CD8-positive, alpha-beta T cell (primary cell): ENCODE measurements at regions of chr1 and their contacts with region 1.

Region 1: DNA sequence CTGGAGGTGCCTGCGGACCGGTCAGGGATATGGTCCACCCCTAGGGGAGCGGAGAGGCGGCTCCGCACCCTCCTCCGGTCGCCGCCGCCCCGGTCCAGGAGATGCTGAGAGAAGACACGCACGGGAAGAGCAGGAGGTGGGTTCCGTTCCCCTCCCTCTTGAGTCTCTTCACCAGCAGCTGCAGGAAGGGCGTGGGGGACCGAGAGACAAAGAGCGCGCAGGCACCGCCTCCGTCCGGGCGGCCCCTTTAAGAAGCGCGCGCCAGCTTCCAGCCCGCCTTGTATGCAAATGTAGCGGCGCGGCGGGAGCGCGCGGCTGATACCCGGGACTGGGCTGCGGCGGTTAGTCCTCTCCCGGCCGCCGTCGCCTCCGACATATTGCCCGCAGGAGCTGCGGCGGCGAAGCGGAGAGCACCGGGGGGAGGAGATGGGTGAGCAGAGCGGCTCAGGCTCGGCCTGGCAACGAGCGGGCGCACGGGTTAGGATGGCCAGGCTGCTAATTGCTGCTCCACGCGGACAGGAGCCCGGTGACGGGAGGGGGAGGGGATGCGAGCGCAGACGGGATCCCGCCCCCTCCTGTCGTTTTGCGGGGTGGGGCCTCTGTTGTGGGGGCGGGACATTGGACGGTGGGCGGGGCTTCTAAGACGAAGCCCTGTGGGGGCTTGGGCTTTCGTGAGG is at the start of gene TMEM39B:
- DNase-seq: peak; percentile 85 to 97 (median 92)
- ATAC-seq: peak; percentile 86
- H3K4me3 ChIP-seq: peak within 1 kb of the TSS; percentile 75 to 99
- H3K4me3 Mint-ChIP-seq: peak within 1 kb of the TSS; percentile 82
- H3K27ac ChIP-seq: peak within 1 kb of the TSS; percentile 65 to 74
- H3K27ac Mint-ChIP-seq: peak within 1 kb of the TSS; percentile 86
- H3K4me1 ChIP-seq: peaks cover 18% of the 10 kb centered on the region
- H3K4me1 Mint-ChIP-seq: peaks cover 32% of the 10 kb centered on the region
- H3K27me3 ChIP-seq: no peaks in the 10 kb centered on the region
- H3K27me3 Mint-ChIP-seq: no peaks in the 10 kb centered on the region
- CTCF ChIP-seq: no peak
- total RNA-seq, gene TMEM39B: 6.6 to 7.6 TPM

Region 2: GRCh38 chr1:31762726-31763670 is 309.8 kb before region 1 on chr1:
- CTCF ChIA-PET with region 1: no interaction called
- POLR2A ChIA-PET with region 1: no interaction called
- intact Hi-C with region 1: loop called in 1 of 2 experiments (anchors 5 kb)
- DNase-seq: peak; percentile 39 to 86 (median 69)
- ATAC-seq: peak; percentile 43
- H3K4me3 ChIP-seq: peak overlapping the region; percentile 41 to 57
- H3K4me3 Mint-ChIP-seq: peak overlapping the region; percentile 80
- H3K27ac ChIP-seq: no peak overlapping the region
- H3K27ac Mint-ChIP-seq: no peak overlapping the region
- H3K4me1 ChIP-seq: peaks cover 40% of the 10 kb centered on the region
- H3K4me1 Mint-ChIP-seq: peaks cover 29% of the 10 kb centered on the region
- H3K27me3 ChIP-seq: peaks cover 11 to 14% of the 10 kb centered on the region in 2 experiments
- H3K27me3 Mint-ChIP-seq: peaks cover 11% of the 10 kb centered on the region
- CTCF ChIP-seq: peak; percentile 45

Region 3: DNA sequence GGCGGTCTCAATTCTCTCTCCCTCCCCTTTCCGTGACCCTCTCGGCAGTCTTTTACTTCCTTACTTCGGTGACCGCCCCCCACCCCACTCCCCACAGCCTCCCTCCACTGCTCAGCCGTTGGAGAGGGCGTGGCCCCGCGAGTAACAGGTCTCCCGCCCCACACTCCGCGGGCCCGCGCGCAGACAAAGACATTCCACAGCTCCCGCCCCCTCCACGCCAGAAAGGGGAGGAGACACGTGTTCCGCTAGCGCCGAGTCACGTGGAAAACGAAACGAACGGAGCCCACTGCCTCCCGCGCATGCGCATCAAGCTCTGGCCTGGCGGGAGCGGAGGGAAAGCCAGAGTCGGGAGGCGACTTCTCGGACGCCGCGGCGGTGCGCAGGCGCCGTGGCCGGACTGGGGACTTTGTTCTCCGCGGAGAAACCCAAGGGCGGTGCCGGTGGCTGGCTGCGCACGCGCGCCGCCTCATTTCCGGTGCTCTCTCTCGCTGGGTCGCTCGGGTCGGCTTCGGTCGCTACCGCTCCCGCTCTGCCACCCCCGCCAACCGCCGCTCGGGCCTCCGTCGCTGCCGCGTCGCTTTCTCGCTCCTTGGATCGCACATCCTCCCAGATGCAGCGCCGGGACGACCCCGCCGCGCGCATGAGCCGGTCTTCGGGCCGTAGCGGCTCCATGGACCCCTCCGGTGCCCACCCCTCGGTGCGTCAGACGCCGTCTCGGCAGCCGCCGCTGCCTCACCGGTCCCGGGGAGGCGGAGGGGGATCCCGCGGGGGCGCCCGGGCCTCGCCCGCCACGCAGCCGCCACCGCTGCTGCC is 59.2 kb before region 1 on chr1 and contains the start of gene KHDRBS1:
- CTCF ChIA-PET with region 1: no interaction called
- POLR2A ChIA-PET with region 1: interaction called, 26 read pairs
- intact Hi-C with region 1: loop called (anchors 1 kb)
- DNase-seq: peak; percentile 92 to 100 (median 97)
- ATAC-seq: peak; percentile 85
- H3K4me3 ChIP-seq: peak within 1 kb of the TSS; percentile 82 to 98
- H3K4me3 Mint-ChIP-seq: peak within 1 kb of the TSS; percentile 96
- H3K27ac ChIP-seq: peak within 1 kb of the TSS; percentile 93
- H3K27ac Mint-ChIP-seq: peak within 1 kb of the TSS; percentile 99
- H3K4me1 ChIP-seq: peaks cover 28% of the 10 kb centered on the region
- H3K4me1 Mint-ChIP-seq: peaks cover 30% of the 10 kb centered on the region
- H3K27me3 ChIP-seq: no peaks in the 10 kb centered on the region
- H3K27me3 Mint-ChIP-seq: no peaks in the 10 kb centered on the region
- CTCF ChIP-seq: no peak
- total RNA-seq, gene KHDRBS1: 102 TPM

Region 4: DNA sequence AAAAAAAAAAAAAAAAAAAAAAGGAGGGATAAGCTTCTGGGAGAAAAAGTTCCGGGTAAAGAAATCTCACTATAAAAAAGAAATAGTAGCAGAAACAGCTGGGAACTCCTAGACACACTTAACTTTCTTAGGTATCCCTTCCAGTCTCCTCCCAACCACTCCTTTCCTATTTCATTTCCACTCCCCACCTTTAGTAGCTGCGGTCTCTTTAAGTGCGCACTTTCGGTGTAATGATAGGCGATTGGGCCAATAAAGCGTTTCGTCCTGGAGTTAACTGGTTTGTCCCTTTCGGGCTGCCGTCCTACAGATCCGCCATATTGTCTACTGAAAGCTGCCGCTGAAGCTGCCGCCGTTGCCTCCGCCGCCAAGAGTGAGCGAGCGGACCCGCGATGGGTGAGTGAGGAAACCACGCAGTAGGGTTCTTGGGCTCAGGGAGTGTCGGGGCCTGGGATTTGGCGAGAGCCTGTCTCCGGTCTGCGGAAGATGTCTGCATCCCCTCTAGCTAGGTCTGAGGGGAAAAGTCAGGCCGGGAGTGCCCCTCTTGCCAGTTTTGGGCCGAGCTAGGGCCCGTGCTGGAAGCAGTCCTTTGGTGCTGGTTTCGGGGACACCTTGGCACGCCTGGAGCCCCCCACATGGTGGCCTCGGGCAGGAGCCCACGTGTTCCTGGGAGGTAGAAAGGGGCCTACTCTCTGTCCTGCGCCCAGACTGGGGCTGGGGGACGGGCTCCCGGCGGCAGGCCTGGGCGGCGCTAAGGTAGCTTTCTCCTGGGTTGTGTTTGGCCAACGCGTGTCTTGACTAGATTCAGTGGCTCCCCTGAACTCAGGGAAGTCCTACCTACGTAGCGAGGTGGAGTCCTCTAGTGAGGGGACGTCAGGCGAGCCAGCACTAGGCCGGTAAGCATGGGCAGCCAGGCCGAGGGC is 35.2 kb after region 1 on chr1 and contains the start of gene KPNA6:
- CTCF ChIA-PET with region 1: interaction called, 9 read pairs
- POLR2A ChIA-PET with region 1: interaction called, 51 read pairs
- intact Hi-C with region 1: loop called (anchors 1 kb)
- DNase-seq: peak; percentile 83 to 98 (median 90)
- ATAC-seq: peak; percentile 89
- H3K4me3 ChIP-seq: peak within 1 kb of the TSS; percentile 87 to 95
- H3K4me3 Mint-ChIP-seq: peak within 1 kb of the TSS; percentile 98
- H3K27ac ChIP-seq: peak within 1 kb of the TSS; percentile 84 to 93
- H3K27ac Mint-ChIP-seq: peak within 1 kb of the TSS; percentile 98
- H3K4me1 ChIP-seq: peaks cover 45% of the 10 kb centered on the region
- H3K4me1 Mint-ChIP-seq: peaks cover 50% of the 10 kb centered on the region
- H3K27me3 ChIP-seq: no peaks in the 10 kb centered on the region
- H3K27me3 Mint-ChIP-seq: no peaks in the 10 kb centered on the region
- CTCF ChIP-seq: no peak
- total RNA-seq, gene KPNA6: 51.7 to 58.7 TPM

Region 5: GRCh38 chr1:32127409-32128198 is 54.8 kb after region 1 on chr1:
- CTCF ChIA-PET with region 1: no interaction called
- POLR2A ChIA-PET with region 1: no interaction called
- intact Hi-C with region 1: no loop called
- DNase-seq: no peak
- ATAC-seq: no peak
- H3K4me3 ChIP-seq: no peak overlapping the region
- H3K4me3 Mint-ChIP-seq: no peak overlapping the region
- H3K27ac ChIP-seq: no peak overlapping the region
- H3K27ac Mint-ChIP-seq: peak overlapping the region; percentile 7
- H3K4me1 ChIP-seq: peaks cover 26% of the 10 kb centered on the region
- H3K4me1 Mint-ChIP-seq: peaks cover 56% of the 10 kb centered on the region
- H3K27me3 ChIP-seq: no peaks in the 10 kb centered on the region
- H3K27me3 Mint-ChIP-seq: no peaks in the 10 kb centered on the region
- CTCF ChIP-seq: no peak

Region 6: DNA sequence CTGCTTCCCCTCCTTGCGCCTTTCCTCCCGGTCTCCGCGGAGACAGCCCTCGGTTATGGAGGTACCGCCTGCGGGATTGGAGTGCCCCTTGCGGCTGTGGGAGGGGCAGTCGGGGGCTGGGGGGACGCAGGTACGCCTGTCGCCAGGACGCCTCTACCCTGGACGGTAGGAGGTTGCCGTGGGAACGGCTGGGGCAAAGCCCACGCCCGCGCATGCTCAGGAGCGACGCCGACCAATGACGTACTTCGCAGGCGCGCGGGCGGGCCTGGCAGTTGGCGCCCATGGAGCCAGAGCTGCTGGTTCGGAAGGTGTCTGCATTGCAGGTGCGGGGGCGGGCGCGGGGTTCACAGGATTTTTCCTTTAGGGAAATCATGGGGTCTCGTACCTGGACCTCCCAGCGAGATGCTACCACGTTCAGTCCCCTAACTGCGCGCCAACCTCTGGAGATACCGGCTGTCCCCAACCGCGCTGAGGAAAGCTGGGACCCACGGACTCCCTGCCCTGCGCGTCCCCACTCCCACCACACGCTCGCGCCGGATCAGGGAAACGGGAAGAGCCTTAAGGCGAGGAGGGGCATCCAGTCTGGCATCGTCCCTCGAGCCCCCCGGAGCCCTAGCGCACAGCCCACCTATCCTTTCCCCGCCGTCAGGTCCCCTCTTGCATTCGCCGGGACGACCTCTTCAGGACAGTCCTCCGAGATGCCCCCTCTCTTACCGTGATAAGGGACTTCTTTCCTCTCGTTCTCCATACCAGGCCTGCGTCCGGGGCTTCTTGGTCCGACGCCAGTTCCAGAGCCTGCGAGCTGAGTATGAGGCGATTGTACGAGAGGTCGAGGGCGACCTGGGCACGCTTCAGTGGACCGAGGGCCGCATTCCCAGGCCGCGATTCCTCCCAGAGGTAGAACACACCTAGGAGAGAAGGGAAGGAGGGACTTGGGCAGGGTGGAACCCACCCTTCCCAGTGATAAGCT is 132.9 kb after region 1 on chr1 and contains the start of gene IQCC:
- CTCF ChIA-PET with region 1: no interaction called
- POLR2A ChIA-PET with region 1: interaction called, 4 read pairs
- intact Hi-C with region 1: loop called in 1 of 2 experiments (anchors 10 kb)
- DNase-seq: peak; percentile 68 to 94 (median 85)
- ATAC-seq: peak; percentile 57
- H3K4me3 ChIP-seq: peak within 1 kb of the TSS; percentile 65 to 77
- H3K4me3 Mint-ChIP-seq: peak within 1 kb of the TSS; percentile 87
- H3K27ac ChIP-seq: peak within 1 kb of the TSS; percentile 62 to 67
- H3K27ac Mint-ChIP-seq: peak within 1 kb of the TSS; percentile 84
- H3K4me1 ChIP-seq: peaks cover 30% of the 10 kb centered on the region
- H3K4me1 Mint-ChIP-seq: peaks cover 36% of the 10 kb centered on the region
- H3K27me3 ChIP-seq: no peaks in the 10 kb centered on the region
- H3K27me3 Mint-ChIP-seq: no peaks in the 10 kb centered on the region
- CTCF ChIP-seq: no peak
- total RNA-seq, gene IQCC: 1.3 to 2.0 TPM

Region 7: DNA sequence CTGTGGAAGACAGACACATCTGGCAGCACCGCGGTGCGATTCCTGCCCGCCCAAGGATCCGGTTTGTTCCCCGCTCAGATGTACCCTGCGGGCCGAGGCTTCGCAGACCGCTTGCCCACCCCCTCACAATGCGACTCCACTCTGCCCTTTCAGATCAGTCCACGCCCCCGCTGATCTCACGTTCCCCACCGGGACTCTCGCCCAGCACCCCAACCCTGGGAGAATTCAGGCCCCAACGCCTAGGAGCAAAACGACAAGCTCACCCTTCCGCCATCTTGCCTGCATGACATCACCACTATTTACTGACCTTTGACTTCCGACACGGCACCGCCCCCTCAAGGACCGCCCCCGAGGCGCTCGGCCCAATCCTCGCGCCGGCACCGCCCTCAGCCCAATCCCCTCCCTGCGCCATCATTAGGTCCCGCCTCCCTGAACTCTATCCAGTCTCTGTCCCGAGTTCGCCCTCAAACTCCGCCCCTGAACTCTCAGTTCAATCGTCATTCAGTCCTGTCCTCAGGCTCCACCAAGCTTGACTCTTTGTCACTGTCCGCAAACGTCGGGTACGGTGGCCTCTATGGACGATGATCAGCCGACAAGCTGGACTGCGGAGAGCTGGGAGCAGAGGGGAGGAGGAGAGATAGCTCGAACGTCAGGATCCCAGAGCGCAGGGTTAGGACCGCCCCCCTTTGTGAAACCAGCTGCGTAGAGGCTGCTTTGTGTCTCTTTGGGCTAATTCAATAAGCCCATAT is 321.6 kb after region 1 on chr1 and contains the start of gene BSDC1:
- CTCF ChIA-PET with region 1: no interaction called
- POLR2A ChIA-PET with region 1: no interaction called
- intact Hi-C with region 1: loop called (anchors 1 kb)
- DNase-seq: peak; percentile 97 to 99 (median 98)
- ATAC-seq: peak; percentile 98
- H3K4me3 ChIP-seq: peak within 1 kb of the TSS; percentile 75 to 92
- H3K4me3 Mint-ChIP-seq: peak within 1 kb of the TSS; percentile 99
- H3K27ac ChIP-seq: peak within 1 kb of the TSS; percentile 86 to 98
- H3K27ac Mint-ChIP-seq: peak within 1 kb of the TSS; percentile 100
- H3K4me1 ChIP-seq: peaks cover 11% of the 10 kb centered on the region
- H3K4me1 Mint-ChIP-seq: peaks cover 31% of the 10 kb centered on the region
- H3K27me3 ChIP-seq: no peaks in the 10 kb centered on the region
- H3K27me3 Mint-ChIP-seq: no peaks in the 10 kb centered on the region
- CTCF ChIP-seq: no peak
- total RNA-seq, gene BSDC1: 189 to 201 TPM